CD4-positive, alpha-beta memory T cell (primary cell): ENCODE measurements at regions of chr4 and their contacts with region 1.

Region 1: GRCh38 chr4:157992038-157992705 is 180.7 kb downstream of the GASK1B start:
- DNase-seq: peak in 4 of 5 donors; percentile 18 to 37 (median 28)
- H3K4me3 ChIP-seq: no peak overlapping the region
- H3K4me3 Mint-ChIP-seq: peak overlapping the region in 5 of 8 donors; percentile 18 to 68 (median 45)
- H3K27ac ChIP-seq: no peak overlapping the region
- H3K27ac Mint-ChIP-seq: peak overlapping the region in 1 of 7 donors; percentile 41
- H3K4me1 ChIP-seq: no peaks in the 10 kb centered on the region
- H3K4me1 Mint-ChIP-seq: peaks cover 0 to 4% (median 0%) of the 10 kb centered on the region in 4 donors
- H3K27me3 ChIP-seq: no peaks in the 10 kb centered on the region
- H3K27me3 Mint-ChIP-seq: no peaks in the 10 kb centered on the region

Region 2: GRCh38 chr4:157014621-157015591 is 977.3 kb before region 1 on chr4:
- CTCF ChIA-PET with region 1: no interaction called
- POLR2A ChIA-PET with region 1: no interaction called
- intact Hi-C with region 1: no loop called
- DNase-seq: no peak
- H3K4me3 ChIP-seq: no peak overlapping the region
- H3K4me3 Mint-ChIP-seq: no peak overlapping the region
- H3K27ac ChIP-seq: no peak overlapping the region
- H3K27ac Mint-ChIP-seq: no peak overlapping the region
- H3K4me1 ChIP-seq: no peaks in the 10 kb centered on the region
- H3K4me1 Mint-ChIP-seq: no peaks in the 10 kb centered on the region
- H3K27me3 ChIP-seq: no peaks in the 10 kb centered on the region
- H3K27me3 Mint-ChIP-seq: no peaks in the 10 kb centered on the region

Region 3: DNA sequence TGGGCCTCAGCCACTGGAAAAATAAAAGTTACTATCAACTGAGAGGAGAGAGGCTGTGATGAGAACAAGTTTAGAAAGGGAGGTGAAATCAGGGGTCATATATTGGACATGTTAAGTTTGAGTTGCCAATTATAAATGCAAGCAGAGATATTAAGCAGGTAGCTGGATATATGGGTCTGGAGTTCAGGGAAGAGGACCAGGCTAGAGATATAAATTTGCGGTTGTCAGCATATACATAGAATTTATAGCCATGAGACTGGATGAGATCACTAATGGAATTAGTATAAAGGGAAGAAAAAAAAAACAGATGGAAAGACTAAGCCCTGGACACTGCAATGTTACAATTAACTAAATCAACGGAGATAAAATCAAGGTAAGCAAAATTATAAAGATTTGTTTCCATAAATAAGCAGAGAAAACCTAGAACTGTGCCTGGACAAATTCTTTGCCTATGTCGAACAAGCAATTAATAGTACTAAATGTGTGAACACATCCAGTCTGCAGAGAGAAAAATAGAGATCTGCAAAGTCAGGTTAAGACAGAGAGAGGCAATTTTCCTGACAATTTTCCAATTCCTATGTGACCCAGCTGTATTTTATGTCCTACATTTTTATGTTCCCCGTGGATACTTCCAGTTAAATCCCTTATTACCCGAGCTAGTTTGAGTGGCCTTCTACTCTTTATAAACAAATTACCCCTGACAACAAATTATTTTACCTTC is 84.8 kb before region 1 on chr4:
- CTCF ChIA-PET with region 1: no interaction called
- POLR2A ChIA-PET with region 1: no interaction called
- intact Hi-C with region 1: no loop called
- DNase-seq: no peak
- H3K4me3 ChIP-seq: no peak overlapping the region
- H3K4me3 Mint-ChIP-seq: no peak overlapping the region
- H3K27ac ChIP-seq: no peak overlapping the region
- H3K27ac Mint-ChIP-seq: no peak overlapping the region
- H3K4me1 ChIP-seq: no peaks in the 10 kb centered on the region
- H3K4me1 Mint-ChIP-seq: no peaks in the 10 kb centered on the region
- H3K27me3 ChIP-seq: no peaks in the 10 kb centered on the region
- H3K27me3 Mint-ChIP-seq: no peaks in the 10 kb centered on the region

Region 4: GRCh38 chr4:157973297-157973696 is 18.9 kb before region 1 on chr4:
- CTCF ChIA-PET with region 1: no interaction called
- POLR2A ChIA-PET with region 1: no interaction called
- intact Hi-C with region 1: no loop called
- DNase-seq: no peak
- H3K4me3 ChIP-seq: no peak overlapping the region
- H3K4me3 Mint-ChIP-seq: no peak overlapping the region
- H3K27ac ChIP-seq: no peak overlapping the region
- H3K27ac Mint-ChIP-seq: no peak overlapping the region
- H3K4me1 ChIP-seq: no peaks in the 10 kb centered on the region
- H3K4me1 Mint-ChIP-seq: no peaks in the 10 kb centered on the region
- H3K27me3 ChIP-seq: no peaks in the 10 kb centered on the region
- H3K27me3 Mint-ChIP-seq: no peaks in the 10 kb centered on the region

Region 5: DNA sequence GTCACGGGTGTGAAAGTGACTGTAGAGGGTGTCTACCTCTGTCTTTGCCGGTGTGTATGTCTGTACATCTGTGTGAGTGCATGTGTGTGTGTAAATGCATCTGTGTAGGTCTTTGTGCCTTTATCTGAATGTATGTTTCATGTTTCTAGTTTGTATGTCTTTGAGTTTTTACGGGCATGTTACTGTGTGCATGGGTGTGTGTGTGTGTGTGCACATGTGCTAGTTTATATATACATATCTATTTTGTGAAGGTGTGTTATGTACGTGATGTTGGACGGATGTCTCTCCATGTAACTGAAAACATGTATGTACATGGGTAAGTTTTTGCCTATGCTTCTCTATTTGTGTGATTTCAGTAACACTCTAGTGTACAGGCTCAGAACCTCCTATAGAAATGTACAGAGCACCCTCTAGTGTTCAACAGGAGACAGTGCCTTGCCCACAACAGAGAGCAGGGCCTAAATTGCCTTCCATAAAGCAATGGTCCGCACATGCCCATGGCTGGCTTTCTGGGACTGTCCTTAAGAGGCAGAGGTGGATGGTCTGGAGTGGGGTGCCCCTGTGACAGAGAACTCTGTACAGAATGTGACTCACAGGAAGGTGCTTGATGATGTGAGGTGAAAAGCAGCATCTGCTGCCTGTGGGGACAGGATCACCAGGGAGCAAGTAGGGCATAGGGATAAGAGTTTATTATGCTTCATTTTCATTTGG is 1454.2 kb after region 1 on chr4:
- CTCF ChIA-PET with region 1: no interaction called
- POLR2A ChIA-PET with region 1: no interaction called
- intact Hi-C with region 1: loop called (anchors 5 kb)
- DNase-seq: peak in 4 of 5 donors; percentile 7 to 29 (median 12)
- H3K4me3 ChIP-seq: no peak overlapping the region
- H3K4me3 Mint-ChIP-seq: no peak overlapping the region
- H3K27ac ChIP-seq: no peak overlapping the region
- H3K27ac Mint-ChIP-seq: no peak overlapping the region
- H3K4me1 ChIP-seq: no peaks in the 10 kb centered on the region
- H3K4me1 Mint-ChIP-seq: no peaks in the 10 kb centered on the region
- H3K27me3 ChIP-seq: no peaks in the 10 kb centered on the region
- H3K27me3 Mint-ChIP-seq: peaks cover 7 to 12% of the 10 kb centered on the region in 2 donors